Posterior vena cava (tissue), 2 donors: ENCODE measurements at regions of chr14 and their contacts with region 1.

Region 1: GRCh38 chr14:85644211-85644610 is 114.3 kb downstream of the FLRT2 start:
- DNase-seq: no peak

Region 2: GRCh38 chr14:84686550-84686949 is 957.7 kb before region 1 on chr14:
- intact Hi-C with region 1: loop called in 1 of 2 experiments (anchors 10 kb)
- DNase-seq: no peak